Calu3 (cell line): ENCODE measurements at regions of chr9 and their contacts with region 1.

Region 1: GRCh38 chr9:12719431-12719830 is 26.2 kb downstream of the TYRP1 start:
- DNase-seq: no peak
- H3K4me3 Mint-ChIP-seq: no peak overlapping the region
- H3K27ac Mint-ChIP-seq: no peak overlapping the region
- H3K4me1 Mint-ChIP-seq: peaks cover 34% of the 10 kb centered on the region
- H3K27me3 Mint-ChIP-seq: no peaks in the 10 kb centered on the region
- CTCF ChIP-seq: no peak

Region 2: DNA sequence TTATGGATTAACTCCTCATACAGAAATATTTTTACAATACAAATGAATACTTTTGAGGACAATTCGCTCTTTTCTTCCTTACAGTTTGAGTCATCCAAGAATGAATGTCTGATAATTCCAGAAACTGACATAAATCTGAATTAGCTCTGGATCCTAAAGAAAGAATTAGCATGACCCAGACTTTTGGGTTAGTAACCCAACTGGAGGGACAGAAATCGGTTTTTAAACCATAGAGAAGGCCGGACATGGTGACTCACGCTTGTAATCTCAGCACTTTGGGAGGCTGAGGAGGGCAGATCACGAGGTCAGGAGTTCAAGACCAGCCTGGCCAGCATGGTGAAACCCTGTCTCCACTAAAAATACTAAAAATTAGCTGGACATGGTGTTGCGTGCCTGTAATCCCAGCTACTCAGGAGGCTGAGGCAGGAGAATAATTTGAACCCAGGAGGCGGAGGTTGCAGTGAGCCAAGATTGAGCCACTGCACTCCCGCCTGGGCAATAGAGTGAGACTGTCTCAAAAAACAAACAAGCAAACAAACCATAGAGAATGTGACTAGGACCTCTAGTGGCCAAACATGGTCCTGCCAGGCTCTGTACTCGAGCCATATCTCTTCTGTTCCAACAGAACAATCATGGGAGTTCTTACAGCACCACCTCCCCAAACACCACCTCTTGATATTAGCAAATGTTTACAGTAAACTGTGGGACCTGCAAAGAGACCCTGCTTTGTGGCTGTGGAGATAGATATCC is 100.2 kb after region 1 on chr9:
- CTCF ChIA-PET with region 1: interaction called, 8 read pairs
- intact Hi-C with region 1: loop called (anchors 2 kb)
- DNase-seq: peak; percentile 40
- H3K4me3 Mint-ChIP-seq: peak overlapping the region; percentile 54
- H3K27ac Mint-ChIP-seq: peak overlapping the region; percentile 100
- H3K4me1 Mint-ChIP-seq: peaks cover 40% of the 10 kb centered on the region
- H3K27me3 Mint-ChIP-seq: no peaks in the 10 kb centered on the region
- CTCF ChIP-seq: peak; percentile 15

Region 3: GRCh38 chr9:12859704-12860251 is 140.3 kb after region 1 on chr9:
- CTCF ChIA-PET with region 1: no interaction called
- intact Hi-C with region 1: no loop called
- DNase-seq: peak; percentile 50
- H3K4me3 Mint-ChIP-seq: peak overlapping the region; percentile 58
- H3K27ac Mint-ChIP-seq: peak overlapping the region; percentile 97
- H3K4me1 Mint-ChIP-seq: peaks cover 53% of the 10 kb centered on the region
- H3K27me3 Mint-ChIP-seq: no peaks in the 10 kb centered on the region
- CTCF ChIP-seq: no peak

Region 4: DNA sequence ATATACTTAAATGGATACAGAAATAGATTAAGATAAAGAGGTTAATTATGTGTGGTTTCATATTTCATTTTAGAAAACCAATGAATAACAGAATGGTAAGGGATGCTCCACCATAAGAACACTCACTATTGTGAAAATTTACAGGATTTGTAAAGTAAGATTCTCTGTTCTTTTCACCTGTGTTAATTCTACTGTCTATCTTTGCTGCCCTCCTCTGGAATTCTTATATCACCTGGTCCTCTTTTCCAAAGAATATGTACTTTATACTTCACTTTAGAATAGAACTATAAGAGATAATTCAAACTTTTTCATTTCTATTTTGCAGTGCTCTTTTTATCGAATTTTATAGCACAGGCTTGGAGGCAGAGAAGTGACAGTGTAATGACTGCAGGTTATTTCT is 268.8 kb after region 1 on chr9:
- CTCF ChIA-PET with region 1: no interaction called
- intact Hi-C with region 1: loop called (anchors 5 kb)
- DNase-seq: no peak
- H3K4me3 Mint-ChIP-seq: no peak overlapping the region
- H3K27ac Mint-ChIP-seq: no peak overlapping the region
- H3K4me1 Mint-ChIP-seq: no peaks in the 10 kb centered on the region
- H3K27me3 Mint-ChIP-seq: no peaks in the 10 kb centered on the region
- CTCF ChIP-seq: no peak

Region 5: GRCh38 chr9:13088720-13089427 is 369.4 kb after region 1 on chr9:
- CTCF ChIA-PET with region 1: no interaction called
- intact Hi-C with region 1: loop called (anchors 1 kb)
- DNase-seq: peak; percentile 16
- H3K4me3 Mint-ChIP-seq: no peak overlapping the region
- H3K27ac Mint-ChIP-seq: no peak overlapping the region
- H3K4me1 Mint-ChIP-seq: peaks cover 6% of the 10 kb centered on the region
- H3K27me3 Mint-ChIP-seq: peaks cover 15% of the 10 kb centered on the region
- CTCF ChIP-seq: peak; percentile 51

Region 6: DNA sequence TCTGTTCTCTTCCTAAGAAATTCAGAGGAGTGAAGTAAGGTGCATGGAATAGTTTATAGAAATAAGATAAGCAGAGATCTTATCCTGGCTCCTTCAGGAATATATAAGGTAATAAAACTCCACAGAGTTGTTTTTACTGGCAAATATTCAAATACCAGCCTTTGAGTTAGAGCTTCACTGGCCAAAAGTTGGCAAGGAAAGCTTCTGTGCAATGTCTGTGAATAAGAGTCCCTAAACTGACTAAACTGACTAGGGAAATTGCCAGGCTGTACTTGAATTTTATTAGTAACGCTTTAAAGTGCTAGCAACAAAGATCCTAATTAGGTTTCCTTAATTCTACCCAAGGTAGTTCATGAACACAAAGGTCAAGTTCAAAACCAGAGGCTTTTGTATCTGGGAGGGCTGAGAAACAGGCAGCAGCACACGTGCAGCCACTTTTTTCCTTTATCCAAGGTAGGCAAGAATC is 691.2 kb after region 1 on chr9:
- CTCF ChIA-PET with region 1: no interaction called
- intact Hi-C with region 1: loop called (anchors 10 kb)
- DNase-seq: no peak
- H3K4me3 Mint-ChIP-seq: no peak overlapping the region
- H3K27ac Mint-ChIP-seq: no peak overlapping the region
- H3K4me1 Mint-ChIP-seq: no peaks in the 10 kb centered on the region
- H3K27me3 Mint-ChIP-seq: no peaks in the 10 kb centered on the region
- CTCF ChIP-seq: no peak